ENCODE measurements at regions of chr19 and their contacts with region 1.

Region 1: GRCh38 chr19:5577785-5578493 is 10.2 kb upstream of the TINCR start:
- DNase-seq: peak; percentile 46 to 85 (median 72)
- ATAC-seq: peak; percentile 93
- H3K4me3 ChIP-seq: no peak overlapping the region
- H3K4me3 Mint-ChIP-seq: no peak overlapping the region
- H3K27ac ChIP-seq: no peak overlapping the region
- H3K27ac Mint-ChIP-seq: peak overlapping the region; percentile 21
- H3K4me1 ChIP-seq: no peaks in the 10 kb centered on the region
- H3K4me1 Mint-ChIP-seq: peaks cover 7% of the 10 kb centered on the region
- H3K27me3 ChIP-seq: no peaks in the 10 kb centered on the region
- H3K27me3 Mint-ChIP-seq: no peaks in the 10 kb centered on the region
- CTCF ChIP-seq: peak; percentile 98

Region 2: DNA sequence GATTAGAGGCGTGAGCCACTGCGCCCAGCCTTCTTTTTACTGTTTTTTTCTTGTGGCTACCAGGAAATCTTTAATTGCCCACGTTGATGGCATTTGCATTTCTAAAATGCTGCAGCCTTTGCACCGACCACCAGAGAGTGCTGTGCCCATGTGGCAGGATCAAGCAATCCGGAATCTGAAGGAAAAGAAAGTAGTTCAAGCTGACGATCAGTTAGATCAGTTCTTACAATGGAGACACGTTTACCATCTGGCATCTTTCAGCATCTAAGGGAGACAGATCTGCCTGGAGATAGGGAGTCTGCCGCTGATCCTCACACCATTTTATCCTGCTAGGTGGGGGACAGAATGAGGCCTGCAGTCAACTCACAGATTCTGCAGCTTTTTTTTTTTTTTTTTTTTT is 30.1 kb before region 1 on chr19:
- CTCF ChIA-PET with region 1: interaction called, 3 read pairs
- POLR2A ChIA-PET with region 1: no interaction called
- intact Hi-C with region 1: loop called in 1 of 2 experiments (anchors 1 kb)
- DNase-seq: peak in 3 of 9 experiments; percentile 18 to 44 (median 32)
- ATAC-seq: no peak
- H3K4me3 ChIP-seq: no peak overlapping the region
- H3K4me3 Mint-ChIP-seq: no peak overlapping the region
- H3K27ac ChIP-seq: no peak overlapping the region
- H3K27ac Mint-ChIP-seq: no peak overlapping the region
- H3K4me1 ChIP-seq: no peaks in the 10 kb centered on the region
- H3K4me1 Mint-ChIP-seq: peaks cover 2% of the 10 kb centered on the region
- H3K27me3 ChIP-seq: no peaks in the 10 kb centered on the region
- H3K27me3 Mint-ChIP-seq: no peaks in the 10 kb centered on the region
- CTCF ChIP-seq: peak; percentile 24